ENCODE measurements at regions of chr5 and their contacts with region 1.

Region 1: GRCh38 chr5:39217365-39218281 is 1.7 kb downstream of the FYB1 start:
- DNase-seq: peak; percentile 82
- H3K4me3 ChIP-seq: peak overlapping the region in 7 of 8 donors; percentile 25 to 65 (median 40)
- H3K27ac ChIP-seq: peak overlapping the region; percentile 23 to 88 (median 78)
- H3K4me1 ChIP-seq: peaks cover under 1 to 88% (median 57%) of the 10 kb centered on the region in 6 donors
- H3K27me3 ChIP-seq: no peaks in the 10 kb centered on the region
- CTCF ChIP-seq: peak; percentile 92 to 98 (median 96)
- POLR2A ChIP-seq: no peak

Region 2: DNA sequence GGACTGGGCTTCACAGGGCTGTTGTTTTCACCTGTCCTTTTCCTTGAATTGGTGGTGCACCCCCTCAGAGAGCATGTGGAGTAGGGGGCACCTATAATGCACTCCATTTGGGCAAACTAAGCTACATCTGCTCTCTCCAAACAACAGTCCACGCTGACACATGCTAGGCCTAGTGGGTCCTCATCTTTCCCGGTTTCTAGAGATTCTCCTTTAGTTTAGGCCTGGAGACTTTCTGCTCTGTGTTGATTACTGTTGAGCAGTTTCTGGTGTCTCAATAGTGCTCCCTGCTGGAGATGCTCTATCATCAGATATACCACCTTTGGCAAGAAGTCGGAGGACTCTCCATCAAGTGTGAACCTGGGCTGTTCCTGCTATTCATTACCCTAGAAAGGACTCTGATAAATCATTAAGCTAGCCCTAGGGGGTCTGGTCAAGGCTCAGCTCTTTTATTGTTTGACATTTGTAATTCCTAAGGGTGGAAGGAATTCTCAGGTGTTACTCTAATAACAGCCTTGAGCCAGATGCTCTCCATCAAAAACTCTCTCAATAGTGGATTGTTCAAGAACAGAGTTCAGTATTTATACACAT is 65.7 kb after region 1 on chr5:
- intact Hi-C with region 1: loop called (anchors 5 kb)
- DNase-seq: no peak
- H3K4me3 ChIP-seq: no peak overlapping the region
- H3K27ac ChIP-seq: peak overlapping the region in 2 of 8 donors; percentile 35 to 67
- H3K4me1 ChIP-seq: peaks cover 0 to 14% (median 2%) of the 10 kb centered on the region in 6 donors
- H3K27me3 ChIP-seq: peaks cover 0 to 3% (median 0%) of the 10 kb centered on the region in 7 donors
- CTCF ChIP-seq: peak in 10 of 11 experiments; percentile 49 to 78 (median 69)
- POLR2A ChIP-seq: no peak

Region 3: GRCh38 chr5:39570403-39571027 is 352.9 kb after region 1 on chr5:
- intact Hi-C with region 1: loop called (anchors 5 kb)
- DNase-seq: no peak
- H3K4me3 ChIP-seq: no peak overlapping the region
- H3K27ac ChIP-seq: no peak overlapping the region
- H3K4me1 ChIP-seq: peaks cover 0 to 11% (median 0%) of the 10 kb centered on the region in 6 donors
- H3K27me3 ChIP-seq: no peaks in the 10 kb centered on the region
- CTCF ChIP-seq: peak in 9 of 11 experiments; percentile 27 to 69 (median 60)
- POLR2A ChIP-seq: no peak